Colonic mucosa (tissue), 4 donors: ENCODE measurements at regions of chr5 and their contacts with region 1.

Region 1: DNA sequence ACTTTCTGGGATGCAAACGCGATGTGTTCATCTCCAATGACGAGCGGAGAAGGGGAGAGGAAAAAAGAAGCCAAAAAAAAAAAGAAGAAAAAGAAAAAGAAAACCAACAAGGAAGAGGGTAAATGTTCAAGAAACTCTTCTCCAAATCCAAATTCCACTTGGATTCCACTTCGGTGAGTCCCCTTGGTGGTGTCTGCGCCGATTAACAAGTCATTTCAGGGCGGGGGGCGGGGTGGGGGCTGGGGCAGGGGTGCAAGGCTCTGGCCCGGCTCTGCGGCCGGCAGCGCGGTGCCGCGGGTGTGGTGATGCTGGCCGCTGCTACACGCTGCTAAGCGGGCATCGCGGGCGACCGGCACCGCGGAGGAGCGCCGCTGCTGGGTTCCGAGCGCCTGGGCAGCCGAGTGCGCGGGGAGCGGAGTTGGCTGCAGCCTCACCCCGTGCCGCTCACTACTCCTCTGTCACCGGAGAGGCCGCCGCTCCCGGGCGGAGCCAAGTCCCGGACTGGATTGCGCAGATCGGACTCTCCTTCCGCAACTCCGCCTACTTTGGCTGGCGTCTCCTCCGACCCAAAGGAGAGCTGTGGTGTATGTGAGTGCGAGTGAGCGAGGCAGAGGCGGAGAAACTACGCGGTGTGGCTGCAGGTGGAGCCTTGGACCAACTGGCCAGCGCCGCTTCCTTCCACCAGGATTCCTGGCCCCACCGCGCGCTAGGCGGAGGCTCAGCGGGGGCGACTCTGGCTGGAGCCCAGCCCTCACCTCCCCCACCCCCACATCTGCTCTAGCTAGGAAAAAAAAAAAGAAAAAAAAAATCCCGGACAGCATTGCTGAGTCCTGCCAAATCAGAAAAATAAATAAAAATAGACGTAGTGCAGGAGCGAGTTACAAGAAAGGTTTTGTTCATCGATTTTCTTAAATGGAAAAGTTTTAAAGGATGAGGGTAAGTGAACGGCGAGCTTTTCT is at the start of gene SEMA6A:
- DNase-seq: peak; percentile 97
- H3K4me3 ChIP-seq: peak within 1 kb of the TSS; percentile 76
- H3K27ac ChIP-seq: peak within 1 kb of the TSS; percentile 82
- H3K4me1 ChIP-seq: no peaks in the 10 kb centered on the region
- H3K27me3 ChIP-seq: no peaks in the 10 kb centered on the region
- CTCF ChIP-seq: no peak
- total RNA-seq, gene SEMA6A: 66.7 to 89.9 TPM

Region 2: DNA sequence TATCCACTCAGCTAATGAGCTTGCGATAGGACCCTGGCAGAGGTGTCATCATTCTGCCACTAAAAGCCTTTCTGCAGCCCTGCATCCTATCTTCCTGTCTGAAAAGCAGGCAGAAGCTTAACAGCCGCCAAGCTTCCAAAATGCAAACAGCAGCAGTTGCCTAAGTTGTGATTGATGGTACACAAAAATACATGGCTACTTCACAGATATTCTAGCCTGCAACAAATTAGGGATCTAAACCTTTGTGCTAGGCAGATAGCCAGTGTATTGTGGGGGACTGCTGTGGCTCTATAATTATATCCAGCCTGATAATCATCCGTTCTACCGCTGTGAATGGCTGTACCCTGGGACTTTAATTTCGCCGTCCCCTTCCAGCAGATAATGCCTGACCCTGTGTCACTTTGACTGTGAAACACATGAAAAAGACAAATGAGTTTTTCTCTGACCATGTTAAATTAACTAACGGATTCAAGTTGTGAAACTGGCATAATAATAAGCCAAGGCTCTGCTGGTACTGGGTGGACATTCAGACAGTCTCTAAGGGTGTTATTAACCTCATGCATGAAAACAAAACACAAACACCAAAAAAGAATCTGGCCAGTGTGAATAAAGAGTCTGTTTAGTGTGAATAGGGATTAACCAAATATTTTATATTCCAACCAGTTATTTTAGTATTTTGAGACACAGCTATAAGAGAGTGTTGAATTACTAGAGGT is 46.0 kb before region 1 on chr5:
- intact Hi-C with region 1: loop called (anchors 2 kb)
- DNase-seq: no peak
- H3K4me3 ChIP-seq: no peak overlapping the region
- H3K27ac ChIP-seq: peak overlapping the region; percentile 86
- H3K4me1 ChIP-seq: peaks cover 10% of the 10 kb centered on the region
- H3K27me3 ChIP-seq: no peaks in the 10 kb centered on the region
- CTCF ChIP-seq: no peak

Region 3: GRCh38 chr5:116947691-116948528 is 373.3 kb after region 1 on chr5:
- intact Hi-C with region 1: loop called (anchors 5 kb)
- DNase-seq: peak; percentile 77
- H3K4me3 ChIP-seq: no peak overlapping the region
- H3K27ac ChIP-seq: no peak overlapping the region
- H3K4me1 ChIP-seq: no peaks in the 10 kb centered on the region
- H3K27me3 ChIP-seq: no peaks in the 10 kb centered on the region
- CTCF ChIP-seq: peak; percentile 66